ENCODE measurements at regions of chr16 and their contacts with region 1.

Region 1: GRCh38 chr16:30637942-30638341 is 12.8 kb upstream of the PRR14 start:
- DNase-seq: peak; percentile 46
- ATAC-seq: no peak
- H3K4me3 Mint-ChIP-seq: no peak overlapping the region
- H3K27ac Mint-ChIP-seq: no peak overlapping the region
- H3K4me1 Mint-ChIP-seq: peaks cover 18% of the 10 kb centered on the region
- H3K27me3 Mint-ChIP-seq: no peaks in the 10 kb centered on the region

Region 2: DNA sequence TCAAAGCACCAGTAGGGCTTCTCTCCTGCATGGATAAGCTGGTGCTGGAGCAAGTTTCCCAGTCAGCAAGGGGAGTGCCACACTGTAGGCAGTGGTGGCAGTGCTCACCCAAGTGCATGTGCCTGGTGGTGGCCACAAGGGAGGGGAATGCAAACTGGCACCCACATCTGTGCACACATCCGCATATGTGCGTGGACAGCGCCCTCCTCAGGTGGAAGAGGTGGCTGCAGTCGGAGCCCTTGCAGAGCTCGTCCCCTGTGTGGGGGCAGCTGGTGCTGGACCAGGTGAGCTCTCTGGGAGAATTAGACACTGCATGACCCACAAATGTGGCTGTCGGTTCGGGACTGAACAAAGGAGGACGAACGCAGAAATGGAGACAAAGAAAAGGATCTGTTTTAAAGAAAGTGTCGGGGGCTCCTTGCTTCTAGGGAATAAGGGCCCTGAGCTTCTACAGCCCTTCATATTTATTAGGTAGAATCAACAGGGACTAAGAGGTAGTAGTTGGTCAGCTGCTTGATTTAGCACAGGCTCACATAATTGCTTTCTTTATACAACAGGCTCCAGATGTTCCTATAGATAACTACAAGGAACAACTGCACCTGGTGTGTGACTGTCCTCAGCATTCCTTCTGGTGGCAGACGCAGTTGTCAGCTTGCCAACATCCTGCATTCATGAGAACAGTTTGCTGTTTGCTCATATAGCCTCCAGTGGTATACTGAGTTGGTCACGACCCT is 22.4 kb before region 1 on chr16:
- CTCF ChIA-PET with region 1: interaction called, 13 read pairs
- DNase-seq: peak; percentile 88
- ATAC-seq: peak; percentile 87
- H3K4me3 Mint-ChIP-seq: no peak overlapping the region
- H3K27ac Mint-ChIP-seq: no peak overlapping the region
- H3K4me1 Mint-ChIP-seq: peaks cover 15% of the 10 kb centered on the region
- H3K27me3 Mint-ChIP-seq: peaks cover 4% of the 10 kb centered on the region

Region 3: GRCh38 chr16:30650369-30651123 is 12.6 kb after region 1 on chr16 and contains the start of gene PRR14:
- CTCF ChIA-PET with region 1: interaction called, 14 read pairs
- DNase-seq: peak; percentile 100
- ATAC-seq: peak; percentile 79
- H3K4me3 Mint-ChIP-seq: peak within 1 kb of the TSS; percentile 96
- H3K27ac Mint-ChIP-seq: peak within 1 kb of the TSS; percentile 97
- H3K4me1 Mint-ChIP-seq: peaks cover 33% of the 10 kb centered on the region
- H3K27me3 Mint-ChIP-seq: no peaks in the 10 kb centered on the region
- total RNA-seq, gene PRR14: 111 to 116 TPM

Measured in activated CD8-positive, alpha-beta memory T cell treated with anti-CD3 and anti-CD28 coated beads, Interleukin-2, amount 10 ng/mL, durations not matched to agents 7 days and 5 days (primary cell).